AG04450 (cell line): ENCODE measurements at regions of chr5 and their contacts with region 1.

Region 1: DNA sequence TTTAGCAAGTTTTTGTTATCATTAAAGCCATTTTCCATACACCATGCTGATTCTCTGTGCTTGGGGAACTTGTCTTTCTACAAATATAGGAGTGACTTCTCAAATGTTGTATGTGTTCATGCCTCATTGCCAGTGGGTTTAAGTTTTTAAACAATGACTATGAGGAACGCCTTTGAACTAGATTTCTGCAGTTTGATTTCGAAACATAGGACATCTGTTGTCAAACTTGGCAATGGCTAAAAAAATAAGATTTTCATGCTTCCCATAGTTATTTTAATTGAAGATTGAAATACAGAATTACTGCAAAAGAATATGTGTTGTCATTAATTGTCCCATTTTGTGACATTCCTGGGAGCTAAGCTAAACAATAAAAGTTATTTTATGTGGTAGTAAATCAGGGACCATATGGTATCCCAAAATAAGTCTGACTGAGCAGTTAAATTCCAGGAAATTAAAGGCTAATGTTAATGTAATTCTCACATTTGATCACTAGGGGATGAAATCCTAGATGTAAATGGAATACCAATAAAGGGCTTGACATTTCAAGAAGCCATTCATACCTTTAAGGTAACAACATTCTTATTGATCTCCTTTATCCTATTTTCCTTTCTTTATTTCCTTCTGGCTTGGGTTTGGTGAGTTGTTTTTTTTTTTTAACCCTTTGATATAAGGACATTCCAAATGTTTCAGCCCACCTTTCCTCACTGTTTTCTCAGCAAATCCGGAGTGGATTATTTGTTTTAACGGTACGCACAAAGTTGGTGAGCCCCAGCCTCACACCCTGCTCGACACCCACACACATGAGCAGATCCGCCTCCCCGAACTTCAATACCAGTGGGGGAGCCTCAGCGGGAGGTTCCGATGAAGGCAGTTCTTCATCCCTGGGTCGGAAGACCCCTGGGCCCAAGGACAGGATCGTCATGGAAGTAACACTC is 116.7 kb downstream of the GOLPH3 start:
- DNase-seq: no peak
- H3K4me3 ChIP-seq: no peak overlapping the region
- H3K27ac ChIP-seq: no peak overlapping the region
- H3K27me3 ChIP-seq: peaks cover 12% of the 10 kb centered on the region
- CTCF ChIP-seq: peak; percentile 29; the same call in 1 of the 2 replicates

Region 2: DNA sequence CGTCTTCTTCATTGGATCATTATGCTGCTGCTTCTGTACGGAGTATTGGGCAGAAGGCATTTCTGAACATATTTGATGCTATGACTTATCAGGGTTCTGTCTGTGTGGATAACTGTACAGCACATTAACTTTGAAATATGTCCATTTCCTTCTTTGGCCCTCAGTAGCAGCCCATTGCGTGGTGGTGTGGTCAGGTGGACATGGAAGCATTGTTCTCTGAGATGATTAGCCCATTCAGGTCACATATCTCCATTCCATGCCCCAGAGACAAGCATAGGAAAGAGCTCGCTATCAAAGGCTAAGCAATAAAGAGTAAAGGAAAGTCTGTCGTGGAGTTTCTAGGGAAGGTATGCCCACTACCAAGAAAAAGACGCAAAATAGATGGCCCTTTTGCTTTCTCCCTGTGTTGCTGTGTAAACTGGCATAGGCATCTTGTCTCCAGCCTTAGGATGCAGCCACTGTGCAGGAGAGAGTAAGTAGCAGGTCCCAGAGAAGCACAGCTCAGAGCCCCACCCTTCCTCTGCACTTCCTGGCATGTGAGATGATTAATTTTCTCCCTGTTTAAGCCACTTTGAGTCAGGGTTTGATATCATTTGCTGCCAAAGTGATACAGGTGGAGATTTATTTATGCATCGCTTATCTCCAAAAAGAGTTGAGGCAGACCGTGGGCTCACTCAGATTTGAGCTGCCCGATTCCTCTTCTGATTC is 196.5 kb before region 1 on chr5:
- CTCF ChIA-PET with region 1: no interaction called
- POLR2A ChIA-PET with region 1: no interaction called
- DNase-seq: no peak
- H3K4me3 ChIP-seq: no peak overlapping the region
- H3K27ac ChIP-seq: no peak overlapping the region
- H3K27me3 ChIP-seq: peaks cover 7% of the 10 kb centered on the region
- CTCF ChIP-seq: no peak

Region 3: DNA sequence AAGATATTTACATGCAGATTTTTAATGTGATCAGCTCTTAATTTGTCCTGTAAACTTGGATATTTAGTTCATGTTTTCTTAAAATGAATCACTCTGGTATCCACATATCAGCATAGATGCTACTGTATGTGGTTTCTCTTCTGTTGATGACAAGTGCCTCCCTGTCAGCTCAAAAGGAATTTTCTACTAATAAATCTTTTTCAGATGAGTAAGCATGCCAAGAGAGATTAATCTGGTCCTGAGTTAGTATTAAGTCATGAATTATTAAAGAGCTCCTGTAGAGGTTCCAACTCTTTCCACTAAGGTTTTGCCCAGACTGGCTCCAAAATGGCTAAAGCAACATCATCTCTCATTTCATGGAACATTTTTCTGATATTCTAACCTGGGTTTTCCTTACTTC is 12.5 kb before region 1 on chr5:
- CTCF ChIA-PET with region 1: interaction called, 10 read pairs
- POLR2A ChIA-PET with region 1: no interaction called
- DNase-seq: no peak
- H3K4me3 ChIP-seq: no peak overlapping the region
- H3K27ac ChIP-seq: no peak overlapping the region
- H3K27me3 ChIP-seq: peaks cover 16% of the 10 kb centered on the region
- CTCF ChIP-seq: no peak